ENCODE measurements at regions of chr5 and their contacts with region 1.

Region 1: GRCh38 chr5:151771259-151772028 is at the start of gene G3BP1:
- DNase-seq: peak; percentile 100
- H3K4me3 Mint-ChIP-seq: peak within 1 kb of the TSS; percentile 77
- H3K27ac Mint-ChIP-seq: peak within 1 kb of the TSS; percentile 70
- H3K4me1 Mint-ChIP-seq: peaks cover 33% of the 10 kb centered on the region
- H3K27me3 Mint-ChIP-seq: no peaks in the 10 kb centered on the region
- total RNA-seq, gene G3BP1: 220 to 241 TPM

Region 2: GRCh38 chr5:150409638-150410523 is 1361.6 kb before region 1 on chr5:
- CTCF ChIA-PET with region 1: no interaction called
- intact Hi-C with region 1: loop called (anchors 2 kb)
- DNase-seq: peak; percentile 70
- H3K4me3 Mint-ChIP-seq: peak overlapping the region; percentile 98
- H3K27ac Mint-ChIP-seq: peak overlapping the region; percentile 98
- H3K4me1 Mint-ChIP-seq: peaks cover 39% of the 10 kb centered on the region
- H3K27me3 Mint-ChIP-seq: no peaks in the 10 kb centered on the region

Region 3: GRCh38 chr5:151150471-151151262 is 620.8 kb before region 1 on chr5:
- CTCF ChIA-PET with region 1: no interaction called
- intact Hi-C with region 1: loop called (anchors 5 kb)
- DNase-seq: peak; percentile 91
- H3K4me3 Mint-ChIP-seq: peak overlapping the region; percentile 64
- H3K27ac Mint-ChIP-seq: peak overlapping the region; percentile 90
- H3K4me1 Mint-ChIP-seq: peaks cover 94% of the 10 kb centered on the region
- H3K27me3 Mint-ChIP-seq: no peaks in the 10 kb centered on the region

Region 4: GRCh38 chr5:151447174-151448037 is 324.0 kb before region 1 on chr5 and contains the start of gene SLC36A1:
- CTCF ChIA-PET with region 1: interaction called, 11 read pairs
- intact Hi-C with region 1: loop called (anchors 1 kb)
- DNase-seq: peak; percentile 97
- H3K4me3 Mint-ChIP-seq: peak within 1 kb of the TSS; percentile 96
- H3K27ac Mint-ChIP-seq: peak within 1 kb of the TSS; percentile 76
- H3K4me1 Mint-ChIP-seq: peaks cover 15% of the 10 kb centered on the region
- H3K27me3 Mint-ChIP-seq: no peaks in the 10 kb centered on the region
- total RNA-seq, gene SLC36A1: 2.6 to 3.1 TPM

Region 5: DNA sequence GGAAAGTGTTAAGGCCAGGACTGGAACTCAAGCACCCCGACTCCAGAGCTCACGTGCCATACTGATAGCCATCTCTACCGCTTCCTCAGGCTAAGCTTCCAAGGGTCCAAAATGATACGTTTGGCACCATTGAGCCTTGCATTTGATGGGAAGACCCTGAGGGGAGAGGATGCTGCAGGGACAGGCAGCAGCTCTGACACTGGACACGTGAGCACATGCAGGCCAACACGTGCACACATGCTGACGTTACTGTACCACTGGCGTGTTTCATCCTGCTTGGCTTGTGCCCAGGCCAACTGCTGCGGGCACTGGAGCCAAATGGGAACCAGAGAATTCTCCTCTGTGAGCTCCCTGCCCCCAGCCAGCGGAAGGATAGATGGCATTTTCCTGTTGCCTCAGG is 185.5 kb before region 1 on chr5:
- CTCF ChIA-PET with region 1: no interaction called
- intact Hi-C with region 1: no loop called
- DNase-seq: no peak
- H3K4me3 Mint-ChIP-seq: no peak overlapping the region
- H3K27ac Mint-ChIP-seq: no peak overlapping the region
- H3K4me1 Mint-ChIP-seq: no peaks in the 10 kb centered on the region
- H3K27me3 Mint-ChIP-seq: no peaks in the 10 kb centered on the region

Region 6: DNA sequence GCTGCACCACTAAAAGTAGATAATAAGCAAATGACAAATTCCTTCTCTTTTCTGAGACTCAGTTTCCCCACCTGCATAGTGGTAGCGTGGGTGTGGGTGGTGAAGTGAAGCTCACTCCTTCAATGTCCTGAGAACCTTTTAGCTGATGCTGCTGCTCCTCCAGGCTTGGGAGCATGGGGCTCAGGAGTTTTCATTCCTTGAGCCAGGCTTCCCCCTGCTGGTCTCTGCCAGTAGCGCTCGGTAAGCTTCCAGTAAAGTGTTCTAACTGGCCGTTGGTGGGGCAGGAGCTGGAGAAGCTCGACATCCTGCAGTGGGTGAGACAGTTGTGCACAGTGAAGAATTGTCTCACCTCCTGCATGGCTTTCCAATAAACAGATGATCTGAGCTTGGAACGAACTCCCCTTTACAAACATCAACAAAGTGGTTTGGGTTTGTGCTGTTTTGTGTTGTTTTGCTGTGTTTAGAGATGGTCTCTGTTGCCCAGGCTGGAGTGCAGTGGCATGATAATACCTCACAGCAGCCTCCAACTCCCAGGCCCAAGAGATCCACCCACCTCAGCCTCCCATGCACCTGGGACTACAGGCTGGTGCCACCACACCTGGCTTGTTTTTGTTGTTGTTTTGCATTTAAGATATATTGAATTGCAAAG is 119.3 kb before region 1 on chr5:
- CTCF ChIA-PET with region 1: interaction called, 34 read pairs
- intact Hi-C with region 1: no loop called
- DNase-seq: peak; percentile 88
- H3K4me3 Mint-ChIP-seq: no peak overlapping the region
- H3K27ac Mint-ChIP-seq: no peak overlapping the region
- H3K4me1 Mint-ChIP-seq: no peaks in the 10 kb centered on the region
- H3K27me3 Mint-ChIP-seq: no peaks in the 10 kb centered on the region

Region 7: DNA sequence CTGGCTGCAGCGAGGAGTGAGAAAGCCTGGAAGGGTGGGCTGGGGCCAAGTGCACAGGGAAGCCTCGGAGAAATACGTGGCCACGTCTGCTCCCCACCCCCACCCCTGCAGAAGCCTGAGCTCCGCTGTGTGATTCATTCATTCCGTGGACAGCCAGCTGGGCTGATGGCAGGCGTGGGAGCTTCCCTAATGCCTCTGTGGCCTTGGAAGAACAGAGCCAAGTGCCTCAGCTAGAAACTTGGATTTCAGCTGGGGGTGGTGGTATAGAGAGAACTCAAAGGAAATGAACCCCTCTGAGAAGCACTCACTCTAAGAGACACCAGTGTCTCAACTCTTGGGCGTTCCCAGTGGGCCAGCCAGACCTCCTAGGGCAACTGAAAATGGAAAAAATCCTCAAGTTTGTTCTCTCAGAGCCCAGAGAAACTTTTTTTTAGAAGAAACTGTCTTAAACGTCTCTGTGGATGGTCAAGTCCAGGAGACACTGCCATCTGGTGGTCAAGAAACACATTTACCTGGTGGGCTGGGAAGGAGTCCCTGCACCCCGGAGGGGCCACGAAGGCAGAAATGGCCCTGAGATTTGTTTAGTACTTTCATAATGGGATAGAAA is 31.0 kb before region 1 on chr5:
- CTCF ChIA-PET with region 1: interaction called, 5 read pairs
- intact Hi-C with region 1: loop called (anchors 1 kb)
- DNase-seq: peak; percentile 64
- H3K4me3 Mint-ChIP-seq: no peak overlapping the region
- H3K27ac Mint-ChIP-seq: no peak overlapping the region
- H3K4me1 Mint-ChIP-seq: peaks cover 15% of the 10 kb centered on the region
- H3K27me3 Mint-ChIP-seq: no peaks in the 10 kb centered on the region

Region 8: DNA sequence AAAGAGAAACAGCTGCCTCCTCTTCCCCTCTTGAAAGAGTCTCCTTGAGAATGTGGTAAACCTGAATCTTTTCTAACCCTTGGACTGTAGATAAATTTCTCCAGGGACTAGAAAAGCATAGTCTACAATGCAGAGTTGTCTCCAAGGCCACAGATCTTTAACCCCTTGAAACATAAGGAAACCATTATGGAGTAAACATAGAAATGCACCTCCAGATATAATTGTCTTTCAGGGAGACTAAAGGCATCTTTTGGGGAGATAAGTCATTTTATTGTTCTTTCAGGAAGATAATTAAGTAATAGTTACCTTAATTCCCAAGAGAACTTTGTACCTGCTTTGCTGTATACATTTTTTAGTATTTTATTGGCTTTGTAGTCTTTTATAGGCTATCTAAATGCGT is 1345.5 kb after region 1 on chr5:
- CTCF ChIA-PET with region 1: no interaction called
- intact Hi-C with region 1: no loop called
- DNase-seq: no peak
- H3K4me3 Mint-ChIP-seq: no peak overlapping the region
- H3K27ac Mint-ChIP-seq: no peak overlapping the region
- H3K4me1 Mint-ChIP-seq: no peaks in the 10 kb centered on the region
- H3K27me3 Mint-ChIP-seq: no peaks in the 10 kb centered on the region

Measured in activated naive CD4-positive, alpha-beta T cell treated with anti-CD3 and anti-CD28 coated beads for 36 hours (primary cell).